Dorsolateral prefrontal cortex (tissue), 120 donors: ENCODE measurements at regions of chr2 and their contacts with region 1.

Region 1: DNA sequence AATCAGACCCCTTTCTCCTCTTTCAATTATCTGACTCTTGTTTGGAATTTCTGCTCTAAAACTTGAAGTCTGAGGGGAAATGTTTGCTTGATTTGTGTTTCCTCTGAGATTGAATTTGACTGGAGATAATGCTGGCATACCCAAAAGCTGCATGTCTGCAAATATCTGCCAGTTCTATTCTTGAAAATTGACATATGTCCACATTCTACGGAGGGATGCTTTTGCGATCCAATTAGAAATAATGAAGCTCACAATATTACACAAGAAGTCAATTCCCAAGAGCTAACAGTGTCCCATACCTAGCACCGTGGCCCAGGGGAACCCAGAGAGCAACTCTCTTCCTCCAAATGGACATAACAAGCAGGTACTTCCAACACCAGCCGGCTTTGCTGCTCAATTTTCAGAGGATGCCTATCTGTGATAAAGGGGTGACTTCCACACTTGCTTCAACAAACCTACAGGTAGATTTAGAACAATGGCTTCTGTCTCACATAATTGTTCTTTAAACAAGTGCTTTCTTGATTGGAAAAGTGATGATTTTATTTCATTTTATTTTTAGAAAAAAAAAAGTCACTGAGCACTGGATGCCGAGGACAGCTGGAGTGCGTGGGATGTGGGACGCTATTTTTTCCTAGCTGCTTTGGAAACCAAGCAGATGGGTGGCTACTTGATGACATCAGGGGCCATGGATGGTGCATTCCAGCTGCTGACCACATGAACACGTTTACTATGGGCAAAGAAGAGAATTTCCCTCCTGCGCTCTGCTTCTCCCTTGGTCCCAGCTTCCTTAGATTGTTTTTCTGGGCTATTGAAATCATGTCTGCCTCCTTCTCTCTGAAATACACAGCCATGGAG is 488.9 kb downstream of the RNF144A start:
- DNase-seq: peak in 5 of 10 donors; percentile 26 to 63 (median 48)
- H3K4me3 ChIP-seq: no peak overlapping the region
- H3K27ac ChIP-seq: peak overlapping the region in 44 of 59 donors; percentile 5 to 84 (median 59)
- H3K27me3 ChIP-seq: peaks cover 0 to 6% (median 0%) of the 10 kb centered on the region in 45 donors
- CTCF ChIP-seq: no peak

Region 2: DNA sequence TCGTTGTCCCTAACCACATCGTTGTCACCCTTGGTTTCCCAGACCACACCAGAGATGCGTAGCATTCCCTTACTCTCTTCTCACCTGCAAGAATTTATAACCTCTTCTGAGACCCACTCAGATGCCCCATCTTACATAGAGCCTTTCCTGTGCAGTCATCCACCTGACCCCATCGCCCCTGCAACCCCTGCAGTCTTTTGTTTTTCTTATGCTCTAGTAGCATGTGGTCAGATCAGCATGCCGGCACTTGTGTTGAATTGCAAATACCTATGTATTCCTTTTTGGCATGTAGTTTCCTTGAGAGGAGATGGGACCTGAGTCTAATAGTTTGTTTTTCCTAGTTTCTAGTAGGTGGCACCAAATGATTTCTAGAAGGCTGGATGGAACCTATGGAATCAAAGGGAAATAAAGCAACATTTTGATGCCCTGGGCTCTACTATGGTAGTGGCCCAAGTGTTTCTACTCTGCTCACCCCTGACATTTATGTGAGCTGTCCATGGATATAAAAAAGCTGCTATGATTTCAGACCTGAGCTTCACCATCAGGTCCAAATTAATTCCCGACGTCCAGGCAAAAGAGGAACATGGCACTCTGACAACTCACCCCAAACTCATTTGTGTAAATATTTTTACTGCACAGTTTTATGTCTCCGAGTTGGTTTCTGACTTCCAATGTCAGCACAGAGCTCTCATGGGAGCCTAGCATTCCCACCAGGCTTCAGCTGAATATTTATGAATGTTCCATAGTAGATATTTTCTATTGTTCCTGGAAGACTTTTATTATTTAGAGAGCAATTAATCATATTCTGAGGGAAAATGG is 345.2 kb before region 1 on chr2:
- intact Hi-C with region 1: no loop called
- DNase-seq: no peak
- H3K4me3 ChIP-seq: no peak overlapping the region
- H3K27ac ChIP-seq: peak overlapping the region in 3 of 59 donors; percentile 18 to 57 (median 35)
- H3K27me3 ChIP-seq: no peaks in the 10 kb centered on the region
- CTCF ChIP-seq: no peak

Region 3: GRCh38 chr2:7292154-7292691 is 113.9 kb before region 1 on chr2:
- intact Hi-C with region 1: loop called in 1 of 2 experiments (anchors 2 kb)
- DNase-seq: peak in 2 of 10 donors; percentile 64 to 69
- H3K4me3 ChIP-seq: no peak overlapping the region
- H3K27ac ChIP-seq: peak overlapping the region in 42 of 59 donors; percentile 9 to 88 (median 58)
- H3K27me3 ChIP-seq: no peaks in the 10 kb centered on the region
- CTCF ChIP-seq: no peak

Region 4: DNA sequence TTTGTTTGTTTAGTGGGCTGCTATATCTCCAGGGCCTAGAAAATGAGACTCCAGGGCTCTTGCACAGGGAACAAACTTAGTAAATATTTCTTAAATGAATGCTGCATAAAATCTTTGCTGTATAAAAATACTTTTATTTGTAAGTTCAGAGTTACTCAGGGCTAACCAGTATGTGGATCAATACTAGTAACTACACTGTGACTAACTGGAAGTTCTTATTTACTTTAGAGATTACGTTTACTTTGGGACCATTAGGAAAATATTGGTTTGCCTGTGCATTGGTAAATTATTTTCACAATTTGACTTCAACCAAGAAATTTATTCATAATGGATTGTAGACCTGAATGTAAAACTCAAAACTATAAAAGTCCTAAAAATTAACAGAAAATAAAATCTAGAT is 86.6 kb after region 1 on chr2:
- intact Hi-C with region 1: no loop called
- DNase-seq: no peak
- H3K4me3 ChIP-seq: no peak overlapping the region
- H3K27ac ChIP-seq: no peak overlapping the region
- H3K27me3 ChIP-seq: no peaks in the 10 kb centered on the region
- CTCF ChIP-seq: no peak